ENCODE measurements at regions of chr3 and their contacts with region 1.

Region 1: GRCh38 chr3:59771768-59772181 is 722.0 kb upstream of the CFAP20DC start:
- DNase-seq: peak; percentile 92
- ATAC-seq: peak; percentile 98
- H3K4me3 ChIP-seq: no peak overlapping the region
- H3K27ac ChIP-seq: no peak overlapping the region
- H3K4me1 ChIP-seq: peaks cover 15% of the 10 kb centered on the region
- H3K27me3 ChIP-seq: no peaks in the 10 kb centered on the region
- CTCF ChIP-seq: no peak

Region 2: GRCh38 chr3:59818033-59818920 is 46.5 kb after region 1 on chr3:
- CTCF ChIA-PET with region 1: no interaction called
- POLR2A ChIA-PET with region 1: no interaction called
- intact Hi-C with region 1: loop called (anchors 5 kb)
- DNase-seq: peak; percentile 96
- ATAC-seq: peak; percentile 86
- H3K4me3 ChIP-seq: peak overlapping the region; percentile 62
- H3K27ac ChIP-seq: peak overlapping the region; percentile 98
- H3K4me1 ChIP-seq: peaks cover 53% of the 10 kb centered on the region
- H3K27me3 ChIP-seq: no peaks in the 10 kb centered on the region
- CTCF ChIP-seq: no peak

Region 3: DNA sequence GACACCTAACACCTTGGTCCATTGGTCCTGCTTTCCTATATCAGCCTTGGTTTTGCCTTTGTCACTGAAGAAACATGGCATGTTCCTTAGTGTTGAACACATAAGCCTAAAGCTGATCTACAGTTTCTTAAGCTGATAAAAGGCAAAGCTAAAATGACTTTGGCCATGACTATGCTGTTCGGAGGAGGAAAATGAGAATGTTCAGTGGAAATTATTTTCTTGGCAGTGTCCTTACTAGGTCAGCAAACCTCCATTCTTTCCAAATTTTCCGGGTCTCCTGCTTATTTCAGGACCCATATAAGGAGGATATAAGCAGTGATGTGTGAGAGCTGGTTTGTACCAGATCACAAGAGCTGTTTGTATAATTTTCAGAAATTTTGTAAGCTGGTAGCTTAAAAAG is 111.0 kb after region 1 on chr3:
- CTCF ChIA-PET with region 1: no interaction called
- POLR2A ChIA-PET with region 1: no interaction called
- intact Hi-C with region 1: loop called (anchors 1 kb)
- DNase-seq: no peak
- ATAC-seq: no peak
- H3K4me3 ChIP-seq: no peak overlapping the region
- H3K27ac ChIP-seq: no peak overlapping the region
- H3K4me1 ChIP-seq: peaks cover 7% of the 10 kb centered on the region
- H3K27me3 ChIP-seq: no peaks in the 10 kb centered on the region
- CTCF ChIP-seq: no peak

Measured in PC-3 (cell line).